ENCODE measurements at regions of chr9 and their contacts with region 1.

Region 1: GRCh38 chr9:16828340-16829281 is 41.9 kb downstream of the BNC2 start:
- DNase-seq: peak; percentile 39 to 56 (median 49)
- H3K4me3 ChIP-seq: peak overlapping the region; percentile 26
- H3K27ac ChIP-seq: peak overlapping the region; percentile 13 to 68
- H3K4me1 ChIP-seq: peaks cover 10% of the 10 kb centered on the region
- H3K27me3 ChIP-seq: no peaks in the 10 kb centered on the region
- CTCF ChIP-seq: no peak
- EP300 ChIP-seq: no peak
- POLR2A ChIP-seq: no peak

Region 2: DNA sequence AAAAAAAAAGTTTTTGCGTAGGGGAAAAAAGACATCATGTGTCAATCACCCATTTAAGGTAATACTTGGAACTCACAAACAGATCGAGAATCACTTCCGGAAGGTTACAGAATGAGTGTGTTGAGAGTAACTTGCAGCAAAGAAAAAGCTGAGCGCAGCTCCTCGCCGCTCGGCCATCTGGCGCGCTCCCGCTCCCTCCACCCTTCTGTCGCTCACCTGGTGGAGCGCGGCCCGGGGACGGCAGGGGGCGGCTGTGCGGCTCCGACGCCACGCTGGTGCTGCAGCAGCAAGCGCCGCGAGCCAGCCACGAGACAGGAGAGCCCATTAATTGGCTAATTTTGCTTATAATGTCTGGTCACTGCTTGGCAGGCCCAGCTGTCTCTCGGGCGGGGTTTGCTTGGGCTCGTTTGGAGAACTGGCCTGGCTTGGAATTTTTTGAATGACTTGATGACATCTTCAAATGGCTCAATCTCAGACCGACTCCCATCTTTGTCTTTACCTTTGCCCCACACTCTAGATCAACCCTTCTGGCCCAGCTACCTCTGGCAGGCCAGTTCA is 674.0 kb before region 1 on chr9:
- intact Hi-C with region 1: loop called in 1 of 4 experiments (anchors 5 kb)
- DNase-seq: peak; percentile 41 to 67 (median 52)
- H3K4me3 ChIP-seq: no peak overlapping the region
- H3K27ac ChIP-seq: no peak overlapping the region
- H3K4me1 ChIP-seq: no peaks in the 10 kb centered on the region
- H3K27me3 ChIP-seq: no peaks in the 10 kb centered on the region
- CTCF ChIP-seq: peak in 1 of 3 donors; percentile 11
- EP300 ChIP-seq: no peak
- POLR2A ChIP-seq: no peak

Region 3: GRCh38 chr9:16335788-16336580 is 492.6 kb before region 1 on chr9:
- intact Hi-C with region 1: loop called in 1 of 4 experiments (anchors 10 kb)
- DNase-seq: peak; percentile 82 to 95 (median 87)
- H3K4me3 ChIP-seq: no peak overlapping the region
- H3K27ac ChIP-seq: peak overlapping the region; percentile 17 to 81
- H3K4me1 ChIP-seq: peaks cover 17% of the 10 kb centered on the region
- H3K27me3 ChIP-seq: no peaks in the 10 kb centered on the region
- CTCF ChIP-seq: peak in 1 of 3 donors; percentile 10
- EP300 ChIP-seq: peak; percentile 97
- POLR2A ChIP-seq: no peak

Region 4: DNA sequence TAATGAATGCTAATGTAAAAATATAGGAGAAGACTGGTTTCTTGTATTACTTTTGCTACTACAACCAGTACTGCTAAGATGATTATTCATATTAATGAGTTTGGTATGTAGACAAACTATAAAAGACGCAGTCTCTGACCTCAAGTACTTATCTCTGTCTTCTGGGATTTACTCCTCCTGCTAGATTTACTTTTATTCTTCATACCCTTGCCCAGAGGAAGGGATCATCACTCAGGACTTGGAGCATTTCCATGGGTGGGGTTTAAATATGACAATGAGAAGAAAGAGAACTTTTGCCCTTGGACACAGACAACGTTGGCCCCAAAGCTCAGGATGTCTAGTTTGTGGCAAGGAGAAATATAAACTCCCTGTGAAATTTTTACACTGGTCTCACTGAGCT is 84.2 kb before region 1 on chr9:
- intact Hi-C with region 1: loop called in 1 of 4 experiments (anchors 5 kb)
- DNase-seq: no peak
- H3K4me3 ChIP-seq: no peak overlapping the region
- H3K27ac ChIP-seq: no peak overlapping the region
- H3K4me1 ChIP-seq: peaks cover 7% of the 10 kb centered on the region
- H3K27me3 ChIP-seq: no peaks in the 10 kb centered on the region
- CTCF ChIP-seq: no peak
- EP300 ChIP-seq: no peak
- POLR2A ChIP-seq: no peak